ENCODE measurements at regions of chr1 and their contacts with region 1.

Region 1: GRCh38 chr1:204446370-204447111 is 34.9 kb upstream of the PPP1R15B start:
- DNase-seq: peak in 1 of 2 experiments; percentile 34
- H3K4me3 ChIP-seq: no peak overlapping the region
- H3K27ac ChIP-seq: no peak overlapping the region
- H3K4me1 ChIP-seq: peaks cover 73% of the 10 kb centered on the region
- H3K27me3 ChIP-seq: no peaks in the 10 kb centered on the region
- CTCF ChIP-seq: peak; percentile 57

Region 2: DNA sequence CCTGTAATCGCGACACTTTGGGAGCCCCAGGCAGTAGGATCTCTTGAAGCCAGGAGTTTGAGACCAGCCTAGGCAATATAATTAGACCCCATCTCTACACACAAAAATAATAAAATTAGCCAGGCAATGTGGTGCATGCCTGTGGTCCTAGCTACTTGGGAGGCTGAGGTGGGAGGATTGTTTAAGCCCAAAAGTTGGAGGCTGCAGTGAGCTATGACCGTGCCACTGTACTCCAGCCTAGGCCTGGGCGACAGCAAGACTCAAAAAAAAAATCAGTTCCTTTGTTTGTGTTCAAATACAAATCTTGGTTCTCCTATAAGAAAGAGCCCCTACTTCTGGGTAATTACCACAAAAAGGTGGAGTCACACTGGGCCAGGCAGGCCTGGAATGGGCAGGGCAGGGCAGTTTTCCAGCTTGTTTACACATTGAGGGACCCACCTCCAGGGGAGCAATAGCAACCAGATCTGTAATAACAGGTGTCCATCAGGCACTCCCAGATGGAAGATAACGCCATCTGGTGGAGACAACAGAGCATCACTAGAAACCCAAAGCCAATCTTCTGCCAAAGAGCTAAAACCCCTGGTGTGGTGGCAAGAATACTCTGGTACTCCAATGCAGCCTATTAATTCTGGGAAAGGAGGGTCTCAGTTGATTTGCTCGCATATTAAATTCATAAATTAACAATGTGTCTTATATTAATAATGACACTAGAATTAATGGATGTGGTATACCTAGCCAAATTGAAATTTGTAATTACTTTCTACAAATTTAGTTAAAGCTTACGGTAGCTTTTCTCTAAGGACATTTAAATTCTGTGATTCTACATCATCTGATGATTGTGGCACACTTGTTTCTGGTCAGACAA is 48.1 kb before region 1 on chr1:
- CTCF ChIA-PET with region 1: interaction called, 11 read pairs
- POLR2A ChIA-PET with region 1: no interaction called
- intact Hi-C with region 1: no loop called
- DNase-seq: peak; percentile 88 to 92
- H3K4me3 ChIP-seq: no peak overlapping the region
- H3K27ac ChIP-seq: no peak overlapping the region
- H3K4me1 ChIP-seq: 0 out of 2 replicates have a peak, but pooled peaks cover 5% of the 10 kb centered on the region
- H3K27me3 ChIP-seq: no peaks in the 10 kb centered on the region
- CTCF ChIP-seq: peak; percentile 87

Region 3: GRCh38 chr1:204480515-204480914 is 34.0 kb after region 1 on chr1:
- CTCF ChIA-PET with region 1: interaction called, 3 read pairs
- POLR2A ChIA-PET with region 1: interaction called, 7 read pairs
- intact Hi-C with region 1: loop called (anchors 2 kb)
- DNase-seq: no peak
- H3K4me3 ChIP-seq: no peak overlapping the region
- H3K27ac ChIP-seq: 0 out of 2 replicates have a peak overlapping the region, but pooled peaks have one; percentile 9
- H3K4me1 ChIP-seq: peaks cover 64% of the 10 kb centered on the region
- H3K27me3 ChIP-seq: no peaks in the 10 kb centered on the region
- CTCF ChIP-seq: no peak

Region 4: DNA sequence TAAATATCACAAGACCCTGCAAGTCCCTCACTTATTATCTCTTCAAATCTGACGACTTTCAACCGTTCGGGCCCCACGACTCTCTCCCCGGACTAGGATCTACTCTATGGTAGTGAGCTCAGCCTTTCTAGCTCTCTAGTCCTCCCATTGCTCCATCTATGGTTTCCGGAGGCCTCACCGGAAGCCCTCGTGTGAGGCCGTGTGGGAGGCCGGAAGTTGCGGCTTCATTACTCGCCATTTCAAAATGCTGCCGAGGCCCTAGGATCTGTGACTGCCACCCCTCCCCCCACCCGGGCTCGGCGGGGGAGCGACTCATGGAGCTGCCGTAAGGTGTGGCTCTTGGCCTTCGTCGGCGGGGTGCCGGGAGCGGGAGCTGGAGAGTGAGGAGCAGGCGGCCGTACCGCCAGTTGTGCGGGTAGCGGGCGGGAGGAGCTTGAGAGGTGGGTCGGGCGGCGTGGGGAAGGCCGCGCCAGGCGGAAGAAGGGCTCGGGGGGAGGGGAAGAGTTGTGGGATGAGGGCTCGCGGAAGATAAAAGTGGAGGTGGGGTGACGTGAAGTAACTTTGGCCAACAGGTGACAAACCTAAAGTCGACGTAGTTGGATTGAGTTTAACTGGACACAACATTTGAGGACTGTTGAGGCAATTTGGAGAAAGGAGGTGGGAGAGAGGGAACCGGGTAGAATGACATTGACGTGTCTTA is 69.8 kb after region 1 on chr1 and contains the start of gene MDM4:
- CTCF ChIA-PET with region 1: no interaction called
- POLR2A ChIA-PET with region 1: interaction called, 16 read pairs
- intact Hi-C with region 1: no loop called
- DNase-seq: peak; percentile 90 to 93
- H3K4me3 ChIP-seq: peak within 1 kb of the TSS; percentile 70
- H3K27ac ChIP-seq: peak within 1 kb of the TSS; percentile 94
- H3K4me1 ChIP-seq: peaks cover 11% of the 10 kb centered on the region
- H3K27me3 ChIP-seq: no peaks in the 10 kb centered on the region
- CTCF ChIP-seq: no peak
- total RNA-seq, gene MDM4: 69.2 and 82.6 TPM in 2 replicates

Measured in PC-9 (cell line).